Posterior cingulate gyrus (tissue), 11 donors: ENCODE measurements at regions of chr1 and their contacts with region 1.

Region 1: GRCh38 chr1:11262171-11263049 is at the start of gene MTOR:
- DNase-seq: peak; percentile 97 to 100 (median 99)

Region 2: DNA sequence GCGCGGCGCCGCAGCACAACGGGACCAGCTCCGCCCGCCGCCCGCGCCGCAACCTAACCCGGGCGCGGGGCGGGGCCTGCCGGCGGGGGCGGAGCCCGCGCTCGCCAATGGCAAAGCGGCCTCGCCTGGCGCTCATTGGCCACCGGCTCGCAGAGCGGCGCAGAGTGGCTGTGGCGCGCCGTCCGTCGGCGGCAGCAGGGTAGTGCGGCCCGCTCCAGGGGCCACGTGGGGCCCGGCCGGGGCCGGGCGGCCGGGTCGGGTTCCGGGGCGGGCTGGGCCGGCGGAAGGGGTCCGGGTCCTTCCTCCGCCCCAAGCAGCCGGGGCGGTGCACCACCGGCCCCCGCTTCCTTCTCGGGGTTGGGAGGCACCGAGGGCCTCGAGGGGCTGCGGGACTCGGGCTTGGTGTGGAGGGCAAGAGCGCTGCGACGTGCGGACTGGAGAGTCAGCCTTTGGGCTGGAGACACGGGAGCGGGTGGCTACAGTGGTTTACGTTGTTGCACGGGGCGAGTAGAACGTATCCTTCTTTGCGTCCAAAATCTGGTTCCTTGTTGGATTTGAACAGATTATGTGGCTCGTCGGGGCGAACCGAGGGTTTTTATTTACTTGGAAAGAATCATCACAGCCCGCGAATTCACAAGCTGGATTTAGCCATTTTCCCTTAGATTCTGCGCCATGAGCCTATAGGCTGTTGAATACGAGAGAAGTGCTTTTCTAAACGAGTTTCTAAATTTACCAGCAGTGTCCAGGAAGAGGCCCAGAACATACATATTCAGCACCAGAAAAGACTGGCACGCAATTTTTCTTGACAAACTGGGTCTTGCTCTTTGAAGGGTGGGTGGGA is 202.2 kb before region 1 on chr1 and contains the start of gene SRM:
- intact Hi-C with region 1: loop called (anchors 5 kb)
- DNase-seq: peak; percentile 76 to 99 (median 90)

Region 3: DNA sequence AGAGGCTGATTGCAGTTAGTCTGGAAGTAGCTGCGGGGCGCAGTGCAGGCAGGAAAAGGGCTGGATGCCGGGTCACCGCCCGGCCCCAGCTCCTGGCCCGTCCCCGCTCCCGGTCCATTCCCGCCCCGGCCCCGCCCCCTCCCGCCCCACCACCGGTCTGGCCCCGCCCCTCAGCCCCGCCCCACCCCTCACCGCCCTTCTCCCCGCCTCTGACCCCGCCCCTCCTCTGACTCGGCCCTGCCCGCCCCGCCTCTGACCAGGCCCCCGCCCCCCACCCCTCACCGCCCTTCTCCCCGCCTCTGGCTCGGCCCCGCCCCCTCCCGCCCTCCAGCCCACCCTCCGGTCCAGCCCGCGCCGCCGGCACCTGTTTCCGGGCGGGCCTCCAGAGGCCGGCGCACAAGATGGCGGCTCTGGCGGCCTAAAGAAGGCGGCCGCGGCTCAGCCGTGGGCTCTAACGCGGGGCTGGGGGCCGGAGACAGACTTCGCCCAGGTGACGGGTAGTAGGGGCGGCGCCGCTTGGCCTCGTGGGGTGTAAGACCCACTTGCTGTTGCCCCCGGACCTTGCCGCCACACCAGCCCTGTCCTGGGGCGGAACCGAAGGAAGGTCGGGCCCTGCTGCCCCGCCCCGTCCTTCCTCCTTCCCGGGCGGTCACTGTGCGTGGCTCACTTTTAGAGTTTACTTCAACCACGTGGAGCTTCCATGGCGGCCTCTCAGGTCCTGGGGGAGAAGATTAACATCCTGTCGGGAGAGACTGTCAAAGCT is 10.6 kb after region 1 on chr1 and contains the start of gene UBIAD1:
- intact Hi-C with region 1: loop called (anchors 1 kb)
- DNase-seq: peak; percentile 71 to 97 (median 82)